ENCODE measurements at regions of chr15 and their contacts with region 1.

Region 1: GRCh38 chr15:78077058-78077877 is at the start of gene TBC1D2B:
- DNase-seq: peak; percentile 63 to 89 (median 75)
- ATAC-seq: peak; percentile 20 to 78 (median 64)
- H3K4me3 ChIP-seq: peak within 1 kb of the TSS; percentile 73 to 100 (median 90)
- H3K27ac ChIP-seq: peak within 1 kb of the TSS; percentile 73 to 97 (median 90)
- H3K4me1 ChIP-seq: peaks cover 0 to 52% (median 30%) of the 10 kb centered on the region in 12 donors
- H3K27me3 ChIP-seq: no peaks in the 10 kb centered on the region
- CTCF ChIP-seq: peak in 3 of 12 donors; percentile 1 to 23 (median 7)
- POLR2A ChIP-seq: no peak
- total RNA-seq, gene TBC1D2B: 6.5 to 45.2 (median 10.8) TPM

Region 2: GRCh38 chr15:77992356-77993222 is 84.7 kb before region 1 on chr15:
- intact Hi-C with region 1: loop called in 1 of 10 experiments (anchors 5 kb)
- DNase-seq: peak in 1 of 5 donors; percentile 61
- ATAC-seq: peak in 2 of 4 donors; percentile 9 to 19
- H3K4me3 ChIP-seq: no peak overlapping the region
- H3K27ac ChIP-seq: peak overlapping the region; percentile 16 to 95 (median 84)
- H3K4me1 ChIP-seq: peaks cover 6 to 73% (median 54%) of the 10 kb centered on the region in 12 donors
- H3K27me3 ChIP-seq: no peaks in the 10 kb centered on the region
- CTCF ChIP-seq: no peak
- POLR2A ChIP-seq: no peak

Region 3: GRCh38 chr15:78000091-78000926 is 77.0 kb before region 1 on chr15:
- intact Hi-C with region 1: loop called in 3 of 10 experiments (anchors 5 kb)
- DNase-seq: peak; percentile 61 to 86 (median 75)
- ATAC-seq: peak; percentile 65 to 79 (median 74)
- H3K4me3 ChIP-seq: no peak overlapping the region
- H3K27ac ChIP-seq: no peak overlapping the region
- H3K4me1 ChIP-seq: peaks cover 5 to 38% (median 20%) of the 10 kb centered on the region in 12 donors
- H3K27me3 ChIP-seq: no peaks in the 10 kb centered on the region
- CTCF ChIP-seq: peak in 10 of 12 donors; percentile 22 to 64 (median 50)
- POLR2A ChIP-seq: no peak

Region 4: DNA sequence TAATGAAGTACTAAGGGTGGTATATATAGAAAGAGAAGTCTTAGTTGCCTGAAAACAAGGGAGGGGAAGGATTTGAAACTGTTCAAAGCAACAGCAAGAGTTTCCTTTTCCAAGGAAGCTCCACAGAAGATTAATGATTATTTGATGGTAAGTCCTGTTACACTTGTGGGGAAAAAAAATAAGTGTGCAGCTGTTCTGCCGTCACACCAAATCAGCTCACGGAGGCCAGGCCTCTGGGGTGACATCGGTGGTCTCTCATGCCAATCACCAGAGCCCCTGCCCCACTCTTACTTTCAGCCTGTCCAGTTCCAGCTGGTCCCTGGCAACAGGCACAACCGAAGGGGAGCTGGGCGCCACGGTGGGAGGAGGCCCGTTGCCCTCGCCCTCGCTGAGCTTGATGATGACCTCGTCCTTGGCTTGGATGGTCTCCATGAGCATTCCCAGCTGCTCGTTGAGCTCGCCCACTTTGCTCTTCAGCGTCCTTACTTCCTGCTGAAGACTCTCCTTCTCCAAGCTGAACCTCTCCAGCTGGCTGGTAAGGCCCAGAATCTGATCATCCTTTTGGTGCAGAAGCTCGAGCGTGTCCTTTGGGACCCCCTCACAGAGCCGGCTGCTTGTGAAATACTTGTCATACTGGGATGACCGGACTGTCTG is 53.3 kb before region 1 on chr15:
- intact Hi-C with region 1: loop called in 3 of 10 experiments (anchors 5 to 10 kb)
- DNase-seq: peak; percentile 68 to 83 (median 73)
- ATAC-seq: peak; percentile 66 to 91 (median 84)
- H3K4me3 ChIP-seq: no peak overlapping the region
- H3K27ac ChIP-seq: peak overlapping the region in 10 of 12 donors; percentile 13 to 88 (median 57)
- H3K4me1 ChIP-seq: peaks cover 0 to 40% (median 21%) of the 10 kb centered on the region in 12 donors
- H3K27me3 ChIP-seq: no peaks in the 10 kb centered on the region
- CTCF ChIP-seq: no peak
- POLR2A ChIP-seq: no peak

Region 5: GRCh38 chr15:78034495-78035191 is 42.6 kb before region 1 on chr15:
- intact Hi-C with region 1: loop called in 4 of 10 experiments (anchors 5 to 10 kb)
- DNase-seq: peak in 1 of 5 donors; percentile 38
- ATAC-seq: peak; percentile 16 to 62 (median 46)
- H3K4me3 ChIP-seq: peak overlapping the region in 1 of 12 donors; percentile 36
- H3K27ac ChIP-seq: peak overlapping the region in 8 of 12 donors; percentile 14 to 89 (median 48)
- H3K4me1 ChIP-seq: peaks cover 0 to 84% (median 39%) of the 10 kb centered on the region in 12 donors
- H3K27me3 ChIP-seq: no peaks in the 10 kb centered on the region
- CTCF ChIP-seq: no peak
- POLR2A ChIP-seq: no peak

Measured in heart left ventricle (tissue), 16 donors.